ENCODE measurements at regions of chr16 and their contacts with region 1.

Region 1: GRCh38 chr16:12067714-12068401 is 91.3 kb downstream of the SNX29 start:
- DNase-seq: peak; percentile 78
- H3K4me3 ChIP-seq: no peak overlapping the region
- H3K27ac ChIP-seq: no peak overlapping the region
- H3K27me3 ChIP-seq: no peaks in the 10 kb centered on the region
- CTCF ChIP-seq: peak; percentile 92

Region 2: DNA sequence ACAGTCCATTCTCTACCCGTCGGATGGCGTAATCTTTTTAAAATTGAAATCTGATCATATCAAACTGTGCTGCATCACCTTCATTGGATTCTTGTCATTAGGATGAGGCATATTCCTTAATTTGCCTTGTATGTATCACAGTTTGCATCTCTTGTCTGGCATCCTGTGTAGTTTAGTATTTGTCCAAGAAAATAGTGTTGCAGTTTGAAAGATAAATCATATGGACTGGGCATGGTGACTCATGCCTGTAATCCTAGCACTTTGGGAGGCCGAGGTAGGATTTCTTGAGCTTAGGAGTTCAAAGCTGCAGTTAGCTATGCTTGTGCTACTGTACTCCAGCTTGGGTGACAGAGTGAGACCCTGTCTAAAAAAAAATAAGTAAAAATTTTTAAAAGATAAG is 210.7 kb before region 1 on chr16:
- CTCF ChIA-PET with region 1: interaction called, 19 read pairs
- POLR2A ChIA-PET with region 1: no interaction called
- DNase-seq: no peak
- H3K4me3 ChIP-seq: no peak overlapping the region
- H3K27ac ChIP-seq: no peak overlapping the region
- H3K27me3 ChIP-seq: no peaks in the 10 kb centered on the region
- CTCF ChIP-seq: no peak

Region 3: DNA sequence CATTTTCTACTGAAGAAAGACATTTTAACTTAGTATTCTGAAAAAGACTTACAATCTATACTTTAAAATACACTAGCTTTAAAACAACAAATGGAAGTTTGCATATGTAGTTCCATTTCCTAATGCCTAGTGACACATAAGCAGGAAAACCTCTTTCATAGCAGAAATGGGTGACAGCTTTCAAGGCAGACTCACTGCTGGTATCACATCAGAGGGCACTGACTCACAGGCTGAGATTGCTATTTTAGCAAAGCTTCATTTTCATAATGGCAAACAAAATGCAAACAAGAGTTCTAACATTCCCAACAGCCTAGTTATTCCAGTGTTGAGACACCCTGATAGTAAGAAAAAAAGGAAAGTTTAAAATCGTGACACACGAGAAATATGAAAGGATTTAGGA is 171.1 kb before region 1 on chr16:
- CTCF ChIA-PET with region 1: interaction called, 15 read pairs
- POLR2A ChIA-PET with region 1: no interaction called
- DNase-seq: peak; percentile 36
- H3K4me3 ChIP-seq: no peak overlapping the region
- H3K27ac ChIP-seq: peak overlapping the region; percentile 22
- H3K27me3 ChIP-seq: no peaks in the 10 kb centered on the region
- CTCF ChIP-seq: no peak

Region 4: GRCh38 chr16:11957591-11958395 is 110.1 kb before region 1 on chr16:
- CTCF ChIA-PET with region 1: interaction called, 13 read pairs
- POLR2A ChIA-PET with region 1: no interaction called
- DNase-seq: no peak
- H3K4me3 ChIP-seq: no peak overlapping the region
- H3K27ac ChIP-seq: peak overlapping the region; percentile 31
- H3K27me3 ChIP-seq: no peaks in the 10 kb centered on the region
- CTCF ChIP-seq: no peak

Region 5: DNA sequence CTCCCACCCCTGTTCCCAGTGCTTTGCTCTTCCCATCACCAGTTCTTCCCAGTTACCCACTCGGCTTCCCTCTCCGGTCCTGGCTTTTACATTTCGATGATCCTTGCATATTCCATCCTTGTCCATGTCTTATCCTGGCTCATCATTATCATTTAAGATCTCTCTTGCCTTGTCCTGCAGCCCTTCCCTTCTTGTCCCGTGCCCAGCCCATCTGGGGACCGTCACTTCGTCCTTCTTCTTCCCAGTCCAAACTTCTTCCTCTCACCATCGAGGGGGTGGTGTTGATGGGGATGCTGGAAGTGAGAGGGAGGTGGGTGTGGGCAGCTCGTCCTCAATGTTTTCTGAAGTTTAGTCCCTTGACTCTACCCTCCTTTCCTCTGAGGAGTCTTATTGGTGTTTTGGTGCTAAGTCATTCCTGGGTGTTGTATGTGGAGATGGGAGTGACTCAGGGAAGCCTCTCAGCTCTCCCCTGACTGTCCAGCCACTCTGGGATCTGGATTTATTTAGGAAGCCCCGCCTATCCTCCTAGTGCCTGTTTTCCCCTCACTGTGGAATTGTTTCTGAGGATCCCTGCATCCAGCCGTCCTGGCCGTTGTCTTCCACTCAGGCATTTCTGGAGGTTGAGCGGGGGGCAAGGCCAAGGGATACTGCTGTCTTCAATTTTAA is 90.3 kb before region 1 on chr16:
- CTCF ChIA-PET with region 1: interaction called, 26 read pairs
- POLR2A ChIA-PET with region 1: interaction called, 9 read pairs
- DNase-seq: peak; percentile 56
- H3K4me3 ChIP-seq: peak overlapping the region; percentile 76
- H3K27ac ChIP-seq: peak overlapping the region; percentile 65
- H3K27me3 ChIP-seq: no peaks in the 10 kb centered on the region
- CTCF ChIP-seq: no peak

Region 6: GRCh38 chr16:12141073-12141951 is 73.5 kb after region 1 on chr16:
- CTCF ChIA-PET with region 1: no interaction called
- POLR2A ChIA-PET with region 1: no interaction called
- DNase-seq: no peak
- H3K4me3 ChIP-seq: no peak overlapping the region
- H3K27ac ChIP-seq: no peak overlapping the region
- H3K27me3 ChIP-seq: no peaks in the 10 kb centered on the region
- CTCF ChIP-seq: no peak

Region 7: DNA sequence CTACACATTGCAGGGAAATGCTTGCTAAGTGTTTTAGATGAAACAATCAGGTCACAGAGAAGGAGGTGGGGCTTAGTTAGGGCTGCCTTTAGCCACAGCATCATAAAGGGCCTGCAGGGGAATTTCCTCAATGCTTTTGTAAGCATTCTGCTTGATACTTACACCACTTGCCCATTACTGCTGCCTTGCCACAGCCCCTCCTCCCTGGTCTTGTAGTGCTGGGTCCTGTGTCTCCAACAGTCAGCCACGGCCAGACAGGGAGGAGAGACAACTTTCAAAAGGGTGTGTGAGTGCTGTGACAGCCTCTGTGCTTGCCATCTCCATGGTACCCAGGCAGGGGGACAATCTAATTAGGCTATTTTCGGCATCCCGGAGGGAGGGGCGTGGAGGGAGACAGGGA is 944.7 kb after region 1 on chr16:
- CTCF ChIA-PET with region 1: no interaction called
- POLR2A ChIA-PET with region 1: no interaction called
- DNase-seq: no peak
- H3K4me3 ChIP-seq: no peak overlapping the region
- H3K27ac ChIP-seq: no peak overlapping the region
- H3K27me3 ChIP-seq: no peaks in the 10 kb centered on the region
- CTCF ChIP-seq: no peak